H1 (cell line): ENCODE measurements at regions of chr3 and their contacts with region 1.

Region 1: GRCh38 chr3:180679178-180680096 is at the start of gene CCDC39:
- DNase-seq: peak; percentile 81 to 96
- H3K4me3 ChIP-seq: peak within 1 kb of the TSS; percentile 68 to 95 (median 87)
- H3K27ac ChIP-seq: no peak within 1 kb of the TSS
- H3K4me1 ChIP-seq: no peaks in the 10 kb centered on the region; a peak in 1 of 7 replicates
- H3K27me3 ChIP-seq: no peaks in the 10 kb centered on the region
- CTCF ChIP-seq: peak in 2 of 3 experiments; percentile 3 to 6; a peak in 2 of 4 replicates
- EP300 ChIP-seq: no peak
- POLR2A ChIP-seq: no peak
- RAD21 ChIP-seq: no peak
- total RNA-seq, gene CCDC39: 0.34 and 0.80 TPM in 2 replicates

Region 2: GRCh38 chr3:180646187-180646790 is 33.1 kb before region 1 on chr3:
- CTCF ChIA-PET with region 1: interaction called, 13 read pairs
- POLR2A ChIA-PET with region 1: no interaction called
- DNase-seq: no peak
- H3K4me3 ChIP-seq: no peak overlapping the region
- H3K27ac ChIP-seq: no peak overlapping the region
- H3K4me1 ChIP-seq: no peaks in the 10 kb centered on the region
- H3K27me3 ChIP-seq: no peaks in the 10 kb centered on the region
- CTCF ChIP-seq: peak in 2 of 3 experiments; percentile 18 to 36; a peak in 2 of 4 replicates
- EP300 ChIP-seq: no peak
- POLR2A ChIP-seq: no peak
- RAD21 ChIP-seq: peak; percentile 11 to 23; a peak in 2 of 4 replicates